ENCODE measurements at regions of chr5 and their contacts with region 1.

Region 1: DNA sequence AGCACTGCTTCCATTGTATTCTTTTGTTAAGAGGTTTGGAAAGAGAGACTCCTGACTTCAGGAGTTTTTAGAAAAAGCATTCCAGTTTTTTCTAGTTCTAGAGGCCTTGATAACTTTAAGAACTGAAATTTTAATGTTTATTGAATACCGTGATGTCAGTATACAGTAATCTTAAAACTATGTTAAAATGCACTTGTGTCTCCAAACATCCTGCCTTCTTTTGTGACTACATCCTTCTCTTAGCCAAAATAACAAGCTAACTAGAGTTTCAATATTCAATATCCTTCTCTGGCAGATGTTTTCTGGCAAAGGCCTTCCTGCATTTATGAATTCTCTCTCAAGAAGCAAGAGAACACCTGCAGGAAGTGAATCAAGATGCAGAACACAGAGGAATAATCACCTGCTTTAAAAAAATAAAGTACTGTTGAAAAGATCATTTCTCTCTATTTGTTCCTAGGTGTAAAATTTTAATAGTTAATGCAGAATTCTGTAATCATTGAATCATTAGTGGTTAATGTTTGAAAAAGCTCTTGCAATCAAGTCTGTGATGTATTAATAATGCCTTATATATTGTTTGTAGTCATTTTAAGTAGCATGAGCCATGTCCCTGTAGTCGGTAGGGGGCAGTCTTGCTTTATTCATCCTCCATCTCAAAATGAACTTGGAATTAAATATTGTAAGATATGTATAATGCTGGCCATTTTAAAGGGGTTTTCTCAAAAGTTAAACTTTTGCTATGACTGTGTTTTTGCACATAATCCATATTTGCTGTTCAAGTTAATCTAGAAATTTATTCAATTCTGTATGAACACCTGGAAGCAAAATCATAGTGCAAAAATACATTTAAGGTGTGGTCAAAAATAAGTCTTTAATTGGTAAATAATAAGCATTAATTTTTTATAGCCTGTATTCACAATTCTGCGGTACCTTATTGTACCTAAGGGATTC is 43.1 kb downstream of the NDFIP1 start:
- DNase-seq: peak in 1 of 2 donors; percentile 73
- H3K4me3 ChIP-seq: no peak overlapping the region
- H3K27ac ChIP-seq: no peak overlapping the region
- H3K4me1 ChIP-seq: peaks cover 0 to 7% of the 10 kb centered on the region in 2 donors
- H3K27me3 ChIP-seq: no peaks in the 10 kb centered on the region
- CTCF ChIP-seq: peak; percentile 67 to 87 (median 80)

Region 2: DNA sequence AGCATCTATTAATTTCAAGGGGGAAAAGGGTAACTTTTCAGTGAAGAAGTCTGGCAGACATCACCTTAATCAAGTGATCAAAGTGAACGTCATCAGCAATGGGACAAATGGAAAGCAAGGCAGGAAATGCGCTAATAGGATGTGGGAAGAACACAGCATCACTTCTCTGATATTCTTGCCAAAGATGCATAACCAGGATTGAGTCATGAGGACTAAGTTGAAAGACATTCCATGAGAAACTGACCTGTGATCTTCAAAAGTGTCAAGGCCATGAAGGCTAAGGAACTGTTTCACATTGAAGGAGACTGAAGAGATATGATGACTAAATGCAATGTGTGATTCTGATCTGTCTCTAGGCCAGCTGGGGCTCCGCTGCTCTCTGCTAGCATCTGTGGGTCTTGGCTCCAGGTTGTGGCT is 49.8 kb after region 1 on chr5:
- intact Hi-C with region 1: no loop called
- DNase-seq: no peak
- H3K4me3 ChIP-seq: no peak overlapping the region
- H3K27ac ChIP-seq: no peak overlapping the region
- H3K4me1 ChIP-seq: no peaks in the 10 kb centered on the region
- H3K27me3 ChIP-seq: no peaks in the 10 kb centered on the region
- CTCF ChIP-seq: no peak

Region 3: GRCh38 chr5:142215915-142216681 is 64.4 kb after region 1 on chr5:
- intact Hi-C with region 1: loop called (anchors 5 kb)
- DNase-seq: peak; percentile 23 to 92
- H3K4me3 ChIP-seq: peak overlapping the region in 1 of 2 donors; percentile 4
- H3K27ac ChIP-seq: peak overlapping the region; percentile 67 to 80
- H3K4me1 ChIP-seq: peaks cover 4 to 13% of the 10 kb centered on the region in 2 donors
- H3K27me3 ChIP-seq: no peaks in the 10 kb centered on the region
- CTCF ChIP-seq: no peak

Region 4: GRCh38 chr5:142548739-142549275 is 397.1 kb after region 1 on chr5:
- intact Hi-C with region 1: loop called (anchors 1 kb)
- DNase-seq: peak in 1 of 2 donors; percentile 79
- H3K4me3 ChIP-seq: no peak overlapping the region
- H3K27ac ChIP-seq: no peak overlapping the region
- H3K4me1 ChIP-seq: peaks cover 0 to 5% of the 10 kb centered on the region in 2 donors
- H3K27me3 ChIP-seq: no peaks in the 10 kb centered on the region
- CTCF ChIP-seq: peak; percentile 47 to 72 (median 68)

Region 5: GRCh38 chr5:142888469-142889085 is 736.9 kb after region 1 on chr5:
- intact Hi-C with region 1: loop called (anchors 5 kb)
- DNase-seq: no peak
- H3K4me3 ChIP-seq: no peak overlapping the region
- H3K27ac ChIP-seq: no peak overlapping the region
- H3K4me1 ChIP-seq: peaks cover 0 to 3% of the 10 kb centered on the region in 2 donors
- H3K27me3 ChIP-seq: no peaks in the 10 kb centered on the region
- CTCF ChIP-seq: peak; percentile 70 to 79 (median 75)